ENCODE measurements at regions of chr2 and their contacts with region 1.

Region 1: GRCh38 chr2:43105586-43106558 is 120.5 kb downstream of the ZFP36L2 start:
- DNase-seq: no peak
- ATAC-seq: peak; percentile 67
- H3K4me3 Mint-ChIP-seq: peak overlapping the region; percentile 60
- H3K27ac Mint-ChIP-seq: peak overlapping the region; percentile 85
- H3K4me1 Mint-ChIP-seq: peaks cover 65% of the 10 kb centered on the region
- H3K27me3 Mint-ChIP-seq: no peaks in the 10 kb centered on the region
- CTCF ChIP-seq: no peak

Region 2: DNA sequence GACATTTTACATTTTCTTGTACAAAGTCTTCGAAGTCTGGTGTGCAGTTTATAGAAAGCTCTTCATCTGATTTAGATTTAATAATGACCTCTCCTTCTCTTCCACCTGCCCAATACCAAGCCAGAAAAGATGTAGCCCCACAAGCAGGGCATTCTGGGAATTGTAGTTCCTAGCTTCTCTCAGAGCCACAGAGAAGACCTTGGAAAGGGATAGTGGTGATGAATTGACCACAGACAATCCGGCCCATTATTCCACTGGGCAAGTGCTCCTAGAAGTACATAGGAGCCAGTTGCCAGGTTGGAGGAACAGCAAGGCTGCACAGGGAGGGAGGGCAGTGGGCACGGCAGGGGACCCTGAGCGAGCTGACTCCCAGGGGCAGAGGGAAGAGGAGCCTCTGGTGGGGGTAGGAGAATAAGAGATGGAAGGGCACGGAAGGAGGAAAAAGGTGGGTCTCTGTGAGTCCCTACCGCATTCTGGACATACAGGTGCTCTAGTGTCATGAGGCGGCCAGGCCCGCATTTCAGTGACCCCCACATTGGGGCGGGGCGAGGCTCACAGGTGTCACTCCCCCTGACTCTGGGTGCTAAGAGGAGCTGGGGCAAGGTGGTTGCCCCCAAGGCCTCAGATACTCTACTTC is 161.0 kb before region 1 on chr2:
- CTCF ChIA-PET with region 1: interaction called, 4 read pairs
- POLR2A ChIA-PET with region 1: no interaction called
- intact Hi-C with region 1: loop called (anchors 5 kb)
- DNase-seq: no peak
- ATAC-seq: no peak
- H3K4me3 Mint-ChIP-seq: no peak overlapping the region
- H3K27ac Mint-ChIP-seq: no peak overlapping the region
- H3K4me1 Mint-ChIP-seq: peaks cover 32% of the 10 kb centered on the region
- H3K27me3 Mint-ChIP-seq: no peaks in the 10 kb centered on the region
- CTCF ChIP-seq: no peak

Region 3: GRCh38 chr2:43158259-43158880 is 52.5 kb after region 1 on chr2:
- CTCF ChIA-PET with region 1: no interaction called
- POLR2A ChIA-PET with region 1: no interaction called
- intact Hi-C with region 1: loop called (anchors 2 kb)
- DNase-seq: no peak
- ATAC-seq: peak; percentile 9
- H3K4me3 Mint-ChIP-seq: peak overlapping the region; percentile 71
- H3K27ac Mint-ChIP-seq: peak overlapping the region; percentile 96
- H3K4me1 Mint-ChIP-seq: peaks cover 47% of the 10 kb centered on the region
- H3K27me3 Mint-ChIP-seq: no peaks in the 10 kb centered on the region
- CTCF ChIP-seq: no peak

Region 4: GRCh38 chr2:43194121-43194869 is 88.4 kb after region 1 on chr2:
- CTCF ChIA-PET with region 1: no interaction called
- POLR2A ChIA-PET with region 1: no interaction called
- intact Hi-C with region 1: loop called (anchors 1 kb)
- DNase-seq: no peak
- ATAC-seq: peak; percentile 6
- H3K4me3 Mint-ChIP-seq: peak overlapping the region; percentile 35
- H3K27ac Mint-ChIP-seq: peak overlapping the region; percentile 79
- H3K4me1 Mint-ChIP-seq: peaks cover 44% of the 10 kb centered on the region
- H3K27me3 Mint-ChIP-seq: no peaks in the 10 kb centered on the region
- CTCF ChIP-seq: no peak

Measured in activated B cell treated with CpG ODN at 0.5 μM for 24 hours (primary cell).